Mammary epithelial cell (primary cell): ENCODE measurements at regions of chr2 and their contacts with region 1.

Region 1: GRCh38 chr2:222756951-222757650 is 85.6 kb downstream of the MOGAT1 start:
- DNase-seq: peak; percentile 87
- H3K4me3 ChIP-seq: no peak overlapping the region
- H3K27ac ChIP-seq: peak overlapping the region; percentile 94
- H3K4me1 ChIP-seq: peaks cover 44% of the 10 kb centered on the region
- H3K27me3 ChIP-seq: no peaks in the 10 kb centered on the region
- CTCF ChIP-seq: no peak

Region 2: DNA sequence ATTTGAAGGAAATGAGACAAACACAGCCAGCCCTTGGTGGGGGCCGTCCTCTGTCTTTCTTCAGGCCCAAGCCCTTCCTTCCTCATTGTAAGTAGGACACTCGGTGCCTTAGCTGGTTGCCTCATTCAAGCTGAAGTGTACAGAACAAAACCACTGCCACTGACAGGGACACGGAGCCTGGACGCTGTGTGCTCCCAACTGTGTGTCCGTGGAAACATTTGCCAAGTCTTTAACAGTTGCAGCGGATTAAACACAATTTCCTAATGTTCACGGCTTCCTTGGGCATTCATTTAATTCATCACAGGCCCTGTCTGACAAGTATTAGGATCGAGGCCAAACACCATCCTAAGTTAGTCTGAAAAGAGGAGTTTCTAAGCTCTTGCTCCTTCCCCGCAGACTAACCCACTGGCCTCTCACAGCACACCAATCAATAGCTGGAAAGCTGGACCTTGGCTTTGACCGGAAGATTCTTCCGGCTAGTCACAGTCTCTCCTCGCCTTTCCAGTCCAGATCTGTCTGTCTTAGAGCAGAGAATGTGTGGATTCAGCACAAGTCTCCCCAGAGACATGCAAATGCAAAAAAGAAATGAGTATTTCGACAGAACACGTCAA is 35.0 kb after region 1 on chr2:
- CTCF ChIA-PET with region 1: no interaction called
- dilution Hi-C with region 1: no loop called
- in situ Hi-C with region 1: no loop called
- intact Hi-C with region 1: loop called (anchors 5 kb)
- DNase-seq: no peak
- H3K4me3 ChIP-seq: no peak overlapping the region
- H3K27ac ChIP-seq: no peak overlapping the region
- H3K4me1 ChIP-seq: peaks cover 20% of the 10 kb centered on the region
- H3K27me3 ChIP-seq: no peaks in the 10 kb centered on the region
- CTCF ChIP-seq: no peak